H1 (cell line): ENCODE measurements at regions of chr6 and their contacts with region 1.

Region 1: DNA sequence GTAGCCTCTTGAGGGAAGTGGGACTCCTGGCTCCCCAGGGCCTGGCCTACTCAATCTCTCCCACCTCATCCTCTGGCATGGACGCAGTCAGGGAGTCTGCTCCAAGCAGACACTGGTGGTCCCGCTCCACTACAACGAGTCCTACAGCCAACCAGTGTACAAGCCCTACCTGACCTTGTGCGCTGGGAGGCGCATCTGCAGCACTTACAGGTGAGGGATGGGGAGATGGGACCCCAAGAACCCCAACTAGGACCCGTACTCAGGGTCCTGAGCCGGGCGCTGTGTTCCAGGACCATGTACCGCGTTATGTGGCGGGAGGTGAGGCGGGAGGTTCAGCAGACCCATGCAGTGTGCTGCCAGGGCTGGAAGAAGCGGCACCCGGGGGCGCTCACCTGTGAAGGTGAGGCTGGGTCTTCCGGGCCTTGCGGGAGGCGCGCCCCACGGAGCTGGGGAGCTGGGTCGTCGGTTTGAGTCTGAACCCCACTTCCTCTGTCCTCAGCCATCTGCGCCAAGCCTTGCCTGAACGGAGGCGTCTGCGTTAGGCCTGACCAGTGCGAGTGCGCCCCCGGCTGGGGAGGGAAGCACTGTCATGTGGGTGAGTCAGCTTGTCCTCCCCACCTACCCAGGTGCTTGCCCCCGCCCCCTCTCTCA is 2.1 kb downstream of the EGFL8 start:
- DNase-seq: peak; percentile 61 to 92
- H3K4me3 ChIP-seq: no peak overlapping the region
- H3K27ac ChIP-seq: peak overlapping the region; percentile 33; the same call in 1 of the 2 replicates
- H3K4me1 ChIP-seq: peaks cover 0 to 5% (median 2%) of the 10 kb centered on the region in 4 experiments; a peak in 3 of 7 replicates
- H3K27me3 ChIP-seq: no peaks in the 10 kb centered on the region
- CTCF ChIP-seq: peak in 2 of 3 experiments; percentile 67 to 71; a peak in 3 of 4 replicates
- EP300 ChIP-seq: no peak
- POLR2A ChIP-seq: no peak
- RAD21 ChIP-seq: peak; percentile 71 to 74

Region 2: DNA sequence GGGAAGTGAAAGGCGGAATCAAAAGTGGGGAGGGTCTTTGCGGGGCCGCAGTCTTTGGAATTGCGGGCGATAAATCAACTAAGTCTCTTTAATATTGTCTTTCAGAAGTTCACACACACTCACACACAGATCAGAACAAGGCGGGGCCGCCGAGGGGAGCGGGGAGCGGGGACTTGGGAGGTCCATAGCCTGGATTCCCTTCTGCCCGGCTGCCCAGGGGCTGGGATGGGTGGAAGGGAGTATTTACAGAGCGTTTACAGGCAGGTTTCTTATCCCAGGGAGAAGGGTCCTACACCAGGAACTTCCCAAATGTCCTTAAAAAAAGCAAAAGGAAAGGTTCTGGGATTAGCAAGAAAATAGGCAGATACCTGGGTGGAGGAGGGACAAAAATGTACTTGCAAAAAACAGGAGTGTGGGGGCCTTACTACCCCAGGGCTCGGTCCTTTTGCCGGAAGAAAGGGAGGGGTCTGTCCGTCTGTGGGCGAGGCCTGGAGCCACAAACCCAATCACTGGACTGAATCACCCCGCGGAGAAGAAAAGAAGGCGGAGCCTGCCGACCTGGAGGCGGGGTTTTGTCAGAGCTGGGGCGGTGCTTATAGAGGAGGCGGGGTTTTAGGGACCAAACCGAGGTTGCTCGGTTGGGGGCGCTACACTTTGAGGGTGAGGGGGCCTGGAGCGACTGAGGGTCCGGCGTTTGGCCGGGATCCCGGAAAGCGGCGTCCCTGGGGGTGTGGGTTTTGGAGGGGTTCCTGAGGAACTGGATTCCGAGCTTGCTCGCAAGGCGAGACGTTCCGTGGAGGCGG is 18.0 kb before region 1 on chr6:
- CTCF ChIA-PET with region 1: interaction called, 5 read pairs
- POLR2A ChIA-PET with region 1: interaction called, 15 read pairs
- DNase-seq: peak; percentile 72 to 90
- H3K4me3 ChIP-seq: peak overlapping the region; percentile 51 to 76 (median 70)
- H3K27ac ChIP-seq: no peak overlapping the region
- H3K4me1 ChIP-seq: peaks cover 10 to 33% (median 16%) of the 10 kb centered on the region in 4 experiments
- H3K27me3 ChIP-seq: peaks cover 4 to 41% (median 37%) of the 10 kb centered on the region in 4 experiments
- CTCF ChIP-seq: peak in 2 of 3 experiments; percentile 39 to 60; a peak in 3 of 4 replicates
- EP300 ChIP-seq: no peak
- POLR2A ChIP-seq: no peak
- RAD21 ChIP-seq: no peak; a peak in 1 of 4 replicates

Region 3: DNA sequence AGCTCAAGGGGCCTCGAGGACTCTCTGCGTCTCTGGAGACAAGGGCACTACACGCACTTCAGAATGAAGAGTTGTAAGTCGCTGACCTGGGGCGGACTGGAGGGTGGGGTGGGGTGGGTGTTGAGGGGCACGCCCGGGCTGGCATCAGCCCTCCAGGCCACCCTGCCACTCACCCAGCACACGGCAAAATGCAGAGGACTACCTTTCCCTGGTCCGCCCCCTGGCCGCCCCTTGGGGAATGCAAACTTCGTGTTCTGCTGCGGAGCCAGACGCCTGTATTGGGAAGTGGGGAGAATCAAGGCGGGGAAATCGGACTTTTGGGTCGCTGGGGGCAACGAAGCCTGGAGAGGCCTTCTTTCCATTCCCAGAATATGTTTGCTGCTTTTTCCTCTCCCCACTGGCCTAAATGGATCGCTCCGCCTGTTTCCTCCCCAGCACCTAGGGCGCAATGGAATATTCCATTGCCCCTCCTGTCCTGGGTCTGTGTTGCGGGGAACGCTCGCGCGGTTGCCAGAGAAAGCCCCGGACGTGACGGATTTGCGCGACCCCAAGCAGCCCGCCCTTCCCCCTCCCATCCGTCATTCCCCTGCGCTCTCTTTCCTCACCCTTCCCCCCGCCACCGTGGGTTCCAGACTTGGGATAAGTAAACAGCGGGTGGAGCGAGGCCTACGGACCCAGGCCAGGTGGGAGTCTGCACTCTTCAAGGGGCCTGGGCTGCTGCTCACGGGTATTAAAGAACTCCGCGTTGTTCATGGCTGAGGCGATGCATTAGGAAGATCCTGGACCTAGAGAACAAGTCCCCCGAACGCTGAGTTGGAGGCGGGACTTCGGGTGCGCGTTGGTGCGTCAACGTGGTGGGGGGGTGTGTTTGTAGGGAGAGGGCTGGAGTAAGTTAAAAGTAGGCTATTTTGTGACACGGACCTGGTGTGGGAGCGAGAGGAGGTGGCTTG is 12.7 kb before region 1 on chr6 and contains the start of gene PPT2:
- CTCF ChIA-PET with region 1: interaction called, 16 read pairs
- POLR2A ChIA-PET with region 1: interaction called, 15 read pairs
- DNase-seq: peak; percentile 74 to 88
- H3K4me3 ChIP-seq: peak within 1 kb of the TSS; percentile 77 to 98 (median 92)
- H3K27ac ChIP-seq: peak within 1 kb of the TSS; percentile 70
- H3K4me1 ChIP-seq: peaks cover 10 to 28% (median 16%) of the 10 kb centered on the region in 4 experiments
- H3K27me3 ChIP-seq: peaks cover 4 to 40% (median 37%) of the 10 kb centered on the region in 4 experiments
- CTCF ChIP-seq: peak in 2 of 3 experiments; percentile 13 to 24; a peak in 3 of 4 replicates
- EP300 ChIP-seq: peak in 1 of 2 experiments; percentile 97; a peak in 2 of 3 replicates
- POLR2A ChIP-seq: peak in 1 of 2 experiments; percentile 71; a peak in 1 of 3 replicates
- RAD21 ChIP-seq: 0 out of 4 replicates have a peak, but pooled peaks of 1 of the 2 experiments have one; percentile 9
- total RNA-seq, gene PPT2: 24.1 and 27.9 TPM in 2 replicates

Region 4: DNA sequence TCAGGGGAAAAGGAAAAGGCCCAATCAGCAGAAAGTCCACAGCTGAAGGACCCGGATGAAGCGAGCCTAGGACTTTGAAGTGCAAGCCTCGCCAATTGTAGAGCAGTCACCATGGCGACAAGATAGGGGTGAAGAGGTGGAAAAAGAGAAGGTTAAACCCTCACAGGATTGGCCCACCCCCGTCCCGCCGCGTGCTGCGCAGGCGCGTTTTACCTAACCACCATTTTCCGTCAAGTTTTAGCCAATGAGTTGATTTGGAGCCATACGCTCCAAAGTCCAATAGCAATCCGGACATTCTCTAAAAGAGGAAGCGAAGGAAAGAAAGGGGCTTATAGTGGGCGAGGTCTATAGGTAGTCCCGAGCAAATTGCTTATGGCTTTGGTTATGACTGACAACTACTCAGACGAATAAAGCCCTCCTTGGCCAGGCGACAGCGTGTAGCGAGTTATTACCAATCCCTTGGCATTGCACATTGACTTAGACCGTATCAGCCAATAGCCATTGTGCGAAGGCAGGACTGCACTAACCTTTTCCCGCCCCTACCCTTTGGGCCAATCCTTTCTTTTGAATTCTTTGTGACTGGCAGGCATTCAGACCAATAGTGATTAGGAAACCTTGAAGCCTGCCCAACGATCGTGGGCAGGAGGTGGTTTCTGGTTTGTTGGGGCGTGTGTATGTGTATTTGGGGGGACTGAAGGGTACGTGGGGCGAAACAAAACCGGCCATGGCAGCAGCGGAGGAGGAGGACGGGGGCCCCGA is 11.4 kb after region 1 on chr6 and contains the start of gene RNF5:
- CTCF ChIA-PET with region 1: interaction called, 8 read pairs
- POLR2A ChIA-PET with region 1: interaction called, 49 read pairs
- DNase-seq: peak; percentile 82 to 91
- H3K4me3 ChIP-seq: peak within 1 kb of the TSS; percentile 91 to 99 (median 95)
- H3K27ac ChIP-seq: peak within 1 kb of the TSS; percentile 95
- H3K4me1 ChIP-seq: peaks cover 5 to 20% (median 9%) of the 10 kb centered on the region in 4 experiments; a peak in 6 of 7 replicates
- H3K27me3 ChIP-seq: no peaks in the 10 kb centered on the region; a peak in 1 of 7 replicates
- CTCF ChIP-seq: no peak
- EP300 ChIP-seq: no peak
- POLR2A ChIP-seq: peak in 1 of 2 experiments; percentile 71; a peak in 1 of 3 replicates
- RAD21 ChIP-seq: no peak
- total RNA-seq, gene RNF5: 90.0 and 90.3 TPM in 2 replicates

Region 5: DNA sequence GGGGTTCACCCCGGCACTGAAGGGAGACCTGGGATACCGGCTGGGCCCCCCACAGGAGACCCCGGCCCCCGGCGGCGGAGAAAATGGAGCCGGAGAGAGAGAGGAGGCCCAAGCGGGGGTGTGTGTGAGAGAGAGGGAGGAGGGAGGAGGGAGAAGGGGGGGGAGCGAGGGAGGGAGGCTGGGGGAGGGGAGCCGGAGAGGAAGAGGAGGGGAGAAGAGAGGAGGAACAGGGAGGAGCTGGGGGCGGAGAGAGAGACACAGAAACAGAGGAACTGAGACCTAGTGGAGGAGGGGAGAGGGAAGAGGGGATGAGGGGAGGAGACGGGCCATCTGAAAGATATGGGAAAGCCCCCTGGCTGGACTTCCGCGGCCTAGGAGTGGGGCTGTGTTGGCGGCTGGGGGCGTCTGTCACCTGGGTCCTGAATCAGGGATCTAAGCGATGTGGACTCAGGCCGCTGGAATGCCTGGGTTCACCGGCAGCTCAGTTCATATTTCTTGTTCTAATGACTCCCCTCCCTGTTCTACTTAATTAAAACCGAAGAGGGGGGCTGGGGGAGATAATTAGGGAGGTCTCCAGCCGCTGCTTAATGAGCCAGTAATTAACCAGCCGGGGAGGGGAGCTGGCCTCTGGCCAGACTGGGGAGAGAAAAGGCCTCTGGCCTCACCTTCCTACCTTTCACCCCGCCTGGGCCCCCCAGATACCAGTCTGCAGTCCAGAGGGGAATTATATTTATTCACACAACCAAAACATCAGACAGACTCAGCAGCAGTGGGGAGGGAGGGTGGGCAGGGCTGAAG is 23.7 kb after region 1 on chr6 and contains the start of gene PBX2:
- CTCF ChIA-PET with region 1: interaction called, 4 read pairs
- POLR2A ChIA-PET with region 1: interaction called, 12 read pairs
- DNase-seq: peak; percentile 65 to 70
- H3K4me3 ChIP-seq: peak within 1 kb of the TSS; percentile 30 to 87 (median 64)
- H3K27ac ChIP-seq: peak within 1 kb of the TSS; percentile 76
- H3K4me1 ChIP-seq: peaks cover 8 to 36% (median 18%) of the 10 kb centered on the region in 4 experiments
- H3K27me3 ChIP-seq: no peaks in the 10 kb centered on the region
- CTCF ChIP-seq: no peak
- EP300 ChIP-seq: no peak
- POLR2A ChIP-seq: no peak; a peak in 1 of 3 replicates
- RAD21 ChIP-seq: no peak
- total RNA-seq, gene PBX2: 130 and 133 TPM in 2 replicates